Caco-2 (cell line): ENCODE measurements at regions of chr2 and their contacts with region 1.

Region 1: DNA sequence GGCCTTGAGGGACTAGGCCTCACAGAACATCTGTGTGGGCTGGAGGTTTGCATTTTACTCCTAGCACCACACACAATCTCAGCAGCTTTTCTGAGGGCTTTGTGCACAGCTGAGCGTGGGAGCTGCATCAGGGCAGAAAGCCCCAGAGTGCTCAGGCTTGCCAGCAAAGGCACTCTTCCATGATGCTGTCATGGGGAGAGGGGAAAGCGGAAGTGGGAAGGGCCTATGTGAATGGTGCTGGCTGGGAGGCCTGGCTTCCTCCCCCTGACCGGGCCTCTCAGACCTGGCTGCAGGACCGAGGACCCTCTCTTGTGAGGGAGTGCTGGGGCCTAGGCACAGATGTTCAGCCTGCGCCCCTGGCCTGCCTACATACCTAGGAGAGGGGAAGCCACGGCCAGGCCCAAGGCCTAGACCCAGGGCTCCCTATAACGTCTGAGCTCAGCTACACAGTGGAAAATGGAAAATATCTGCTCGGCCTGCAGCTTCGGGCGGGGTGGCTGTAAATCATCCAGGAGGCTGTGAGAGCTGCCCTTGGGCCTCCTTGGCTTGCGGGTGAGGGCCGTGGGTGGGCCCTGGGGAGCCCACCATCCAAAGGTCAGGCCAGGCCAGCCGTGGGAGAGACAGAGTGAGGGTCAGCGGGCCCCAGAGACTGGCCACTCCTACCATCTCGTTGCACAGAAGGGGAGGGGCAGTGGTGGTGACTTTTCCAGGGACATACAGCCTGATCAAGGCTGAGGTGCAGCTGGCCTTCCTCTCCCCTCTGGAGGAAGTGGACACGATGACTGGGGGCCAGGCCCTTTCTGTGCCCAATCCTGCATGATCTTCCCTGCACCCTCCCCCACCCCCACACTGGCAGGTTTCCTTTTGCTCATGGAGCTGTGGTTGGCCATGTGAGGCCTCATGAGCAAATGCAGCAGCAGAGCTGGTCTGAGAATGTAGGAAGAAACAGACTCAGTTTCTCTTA is 22.8 kb downstream of the GLI2 start:
- DNase-seq: peak in 1 of 2 experiments; percentile 43
- H3K4me3 ChIP-seq: no peak overlapping the region
- H3K4me3 Mint-ChIP-seq: no peak overlapping the region
- H3K27ac Mint-ChIP-seq: no peak overlapping the region
- H3K4me1 ChIP-seq: peaks cover 17% of the 10 kb centered on the region
- H3K4me1 Mint-ChIP-seq: peaks cover 14% of the 10 kb centered on the region
- H3K27me3 ChIP-seq: no peaks in the 10 kb centered on the region
- H3K27me3 Mint-ChIP-seq: no peaks in the 10 kb centered on the region
- CTCF ChIP-seq: no peak

Region 2: DNA sequence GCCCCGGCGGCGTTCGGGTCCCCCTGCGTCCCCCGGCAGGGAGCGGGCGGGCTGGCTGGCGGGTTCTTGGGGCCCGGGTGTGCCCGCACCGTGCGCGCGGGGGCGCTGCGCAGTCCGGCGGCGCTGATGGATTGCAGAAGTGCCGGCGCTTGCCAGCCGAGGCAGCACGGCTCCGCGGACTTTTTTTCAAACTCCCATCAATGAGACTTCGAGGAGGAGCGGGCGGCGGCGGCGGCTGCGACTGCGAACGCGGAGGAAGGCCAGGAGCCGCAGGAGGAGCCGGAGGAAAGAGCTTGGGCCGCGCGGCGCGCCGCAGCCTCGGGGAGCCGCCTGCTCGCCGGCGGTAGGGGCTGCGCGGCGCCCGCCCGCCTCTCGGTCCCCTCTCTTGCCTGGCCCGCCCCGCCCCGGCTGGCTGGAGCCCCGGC is 22.7 kb before region 1 on chr2 and contains the start of gene GLI2:
- CTCF ChIA-PET with region 1: interaction called, 11 read pairs
- POLR2A ChIA-PET with region 1: no interaction called
- intact Hi-C with region 1: no loop called
- DNase-seq: peak; percentile 78 to 85
- H3K4me3 ChIP-seq: peak within 1 kb of the TSS; percentile 39
- H3K4me3 Mint-ChIP-seq: peak within 1 kb of the TSS; percentile 84
- H3K27ac Mint-ChIP-seq: no peak within 1 kb of the TSS
- H3K4me1 ChIP-seq: peaks cover 3% of the 10 kb centered on the region; the same call in 1 of the 2 replicates
- H3K4me1 Mint-ChIP-seq: peaks cover 9% of the 10 kb centered on the region
- H3K27me3 ChIP-seq: 0 out of 2 replicates have a peak, but pooled peaks cover 3% of the 10 kb centered on the region
- H3K27me3 Mint-ChIP-seq: peaks cover 21% of the 10 kb centered on the region
- CTCF ChIP-seq: peak; percentile 74 to 75
- total RNA-seq, gene GLI2: 0.58 and 0.70 TPM in 2 replicates

Region 3: DNA sequence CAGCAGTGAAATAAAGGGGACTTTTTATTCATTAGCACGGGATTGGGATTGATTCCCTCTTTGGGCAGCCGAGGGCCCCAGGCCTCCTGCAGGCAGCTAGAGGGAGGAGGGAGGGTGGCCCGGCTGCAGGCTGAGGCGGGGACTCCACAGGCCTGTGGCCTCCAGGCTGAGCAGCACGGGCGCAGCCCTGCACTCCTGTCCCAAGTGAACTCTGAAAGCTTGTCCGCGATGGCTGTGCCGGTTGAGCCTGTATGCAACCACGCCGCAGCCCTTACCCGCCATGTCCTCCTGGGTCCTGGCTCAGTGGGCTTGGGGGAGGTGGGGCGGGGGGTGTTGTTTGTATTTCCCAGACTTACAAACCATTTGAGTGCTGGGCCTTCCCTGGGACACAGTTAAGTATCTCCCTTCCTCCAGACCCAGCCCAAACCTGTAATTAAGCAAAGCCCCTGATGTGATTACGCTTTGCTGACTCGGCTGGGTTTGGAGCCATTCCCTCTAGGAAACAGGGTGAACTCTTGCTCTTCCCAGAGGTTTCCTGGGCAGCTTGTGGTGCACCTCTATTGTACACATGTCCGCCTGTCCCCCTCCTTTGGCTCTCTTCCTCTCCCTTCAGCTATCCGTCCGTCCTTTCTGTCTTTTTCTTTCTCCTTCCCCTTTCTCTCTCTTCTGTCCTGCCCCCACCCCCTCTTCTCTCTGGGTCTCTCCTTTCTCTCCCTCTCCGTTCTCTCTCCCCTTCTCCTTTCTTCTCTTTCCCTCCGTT is 17.5 kb before region 1 on chr2:
- CTCF ChIA-PET with region 1: interaction called, 11 read pairs
- POLR2A ChIA-PET with region 1: no interaction called
- intact Hi-C with region 1: loop called (anchors 1 kb)
- DNase-seq: peak in 1 of 2 experiments; percentile 52
- H3K4me3 ChIP-seq: peak overlapping the region; percentile 30
- H3K4me3 Mint-ChIP-seq: peak overlapping the region; percentile 51
- H3K27ac Mint-ChIP-seq: no peak overlapping the region
- H3K4me1 ChIP-seq: peaks cover 6% of the 10 kb centered on the region; the same call in 1 of the 2 replicates
- H3K4me1 Mint-ChIP-seq: peaks cover 16% of the 10 kb centered on the region
- H3K27me3 ChIP-seq: peaks cover 3% of the 10 kb centered on the region; the same call in 1 of the 2 replicates
- H3K27me3 Mint-ChIP-seq: peaks cover 22% of the 10 kb centered on the region
- CTCF ChIP-seq: no peak